Mucosa of descending colon (tissue), 3 donors: ENCODE measurements at regions of chr14 and their contacts with region 1.

Region 1: DNA sequence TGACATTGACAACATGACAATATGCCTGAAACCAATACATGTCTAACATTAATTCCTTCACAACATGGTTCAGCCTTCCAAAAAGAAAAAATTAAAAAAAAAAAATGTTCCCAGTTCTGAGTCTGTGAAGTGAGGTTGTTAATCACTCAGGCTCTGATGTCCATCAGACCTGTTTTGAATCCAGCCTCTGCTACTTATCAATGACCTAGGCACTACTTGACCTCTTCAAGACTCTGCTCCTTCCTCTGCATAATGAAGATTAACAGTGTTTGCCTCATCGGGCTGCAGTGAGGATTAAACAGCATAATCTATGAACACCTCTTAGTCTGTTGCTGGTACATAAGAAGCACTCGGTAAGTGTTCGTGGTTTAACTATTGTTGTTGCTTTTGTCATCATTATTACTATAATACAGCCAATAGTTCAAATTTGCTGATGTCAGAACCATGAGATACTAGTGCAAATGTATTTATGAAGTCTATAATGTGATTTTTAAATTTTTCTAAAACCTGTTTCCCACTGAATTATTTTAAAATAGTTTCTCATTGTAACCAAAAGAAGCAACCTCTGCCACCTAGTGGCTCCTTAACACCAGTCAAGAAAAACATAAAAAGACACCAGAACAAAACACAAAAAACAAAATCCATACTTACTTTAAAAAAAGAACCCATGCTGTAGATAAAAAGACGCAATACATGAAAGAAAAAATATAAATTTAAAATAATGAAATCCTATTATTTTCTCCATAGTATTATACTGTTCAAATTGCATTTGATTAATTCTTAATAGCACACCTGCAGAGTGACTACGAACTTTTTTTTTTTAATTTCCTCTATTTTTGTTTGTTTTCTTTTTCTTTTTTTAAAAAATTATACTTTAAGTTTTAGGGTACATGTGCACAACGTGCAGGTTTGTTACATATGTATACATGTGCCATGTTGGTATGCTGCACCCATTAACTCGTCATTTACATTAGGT is 20.3 kb upstream of the TMX1 start:
- DNase-seq: peak in 1 of 3 donors; percentile 48
- ATAC-seq: no peak
- H3K4me3 ChIP-seq: no peak overlapping the region
- H3K4me1 ChIP-seq: no peaks in the 10 kb centered on the region
- CTCF ChIP-seq: peak; percentile 24

Region 2: GRCh38 chr14:50954811-50955372 is 264.9 kb before region 1 on chr14:
- intact Hi-C with region 1: loop called in 1 of 2 experiments (anchors 10 kb)
- DNase-seq: no peak
- ATAC-seq: peak; percentile 66
- H3K4me3 ChIP-seq: no peak overlapping the region
- H3K4me1 ChIP-seq: no peaks in the 10 kb centered on the region
- CTCF ChIP-seq: no peak

Region 3: GRCh38 chr14:51094901-51095853 is 124.6 kb before region 1 on chr14 and contains the start of gene TRIM9:
- intact Hi-C with region 1: loop called in 1 of 2 experiments (anchors 10 kb)
- DNase-seq: peak; percentile 95 to 97 (median 96)
- ATAC-seq: peak; percentile 98
- H3K4me3 ChIP-seq: peak within 1 kb of the TSS; percentile 42
- H3K4me1 ChIP-seq: peaks cover 17% of the 10 kb centered on the region
- CTCF ChIP-seq: no peak
- total RNA-seq, gene TRIM9: 0.72 to 8.7 (median 3.9) TPM

Region 4: GRCh38 chr14:51398898-51399297 is 179.1 kb after region 1 on chr14:
- intact Hi-C with region 1: no loop called
- DNase-seq: no peak
- ATAC-seq: no peak
- H3K4me3 ChIP-seq: no peak overlapping the region
- H3K4me1 ChIP-seq: no peaks in the 10 kb centered on the region
- CTCF ChIP-seq: no peak

Region 5: GRCh38 chr14:51963286-51963685 is 743.5 kb after region 1 on chr14:
- intact Hi-C with region 1: no loop called
- DNase-seq: no peak
- ATAC-seq: no peak
- H3K4me3 ChIP-seq: no peak overlapping the region
- H3K4me1 ChIP-seq: no peaks in the 10 kb centered on the region
- CTCF ChIP-seq: no peak